ENCODE measurements at regions of chr15 and their contacts with region 1.

Region 1: DNA sequence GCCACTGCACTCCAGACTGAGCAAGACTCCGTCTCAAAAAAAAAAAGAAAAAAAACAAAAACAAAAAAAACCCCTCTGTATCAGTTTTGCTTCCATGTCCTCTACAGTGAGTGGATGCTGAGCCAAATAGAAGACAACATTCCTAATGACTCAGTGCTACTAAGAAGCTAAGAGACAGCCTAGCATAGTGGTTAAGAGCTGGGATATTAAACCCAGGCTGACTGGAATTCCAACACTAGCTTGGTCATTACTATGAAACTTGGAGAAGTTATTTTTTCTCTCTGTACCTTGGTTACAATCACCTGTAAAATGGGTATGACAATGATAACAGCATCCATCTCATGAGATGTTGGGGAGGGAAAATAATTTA is 60.9 kb upstream of the PYGO1 start:
- DNase-seq: no peak
- ATAC-seq: no peak
- H3K4me3 ChIP-seq: no peak overlapping the region
- H3K27ac ChIP-seq: no peak overlapping the region
- H3K4me1 ChIP-seq: no peaks in the 10 kb centered on the region
- H3K27me3 ChIP-seq: no peaks in the 10 kb centered on the region

Region 2: GRCh38 chr15:55526559-55527036 is 122.4 kb before region 1 on chr15:
- intact Hi-C with region 1: loop called (anchors 5 to 10 kb)
- DNase-seq: peak in 1 of 2 donors; percentile 59
- ATAC-seq: peak; percentile 48
- H3K4me3 ChIP-seq: no peak overlapping the region
- H3K27ac ChIP-seq: no peak overlapping the region
- H3K4me1 ChIP-seq: no peaks in the 10 kb centered on the region
- H3K27me3 ChIP-seq: no peaks in the 10 kb centered on the region

Region 3: DNA sequence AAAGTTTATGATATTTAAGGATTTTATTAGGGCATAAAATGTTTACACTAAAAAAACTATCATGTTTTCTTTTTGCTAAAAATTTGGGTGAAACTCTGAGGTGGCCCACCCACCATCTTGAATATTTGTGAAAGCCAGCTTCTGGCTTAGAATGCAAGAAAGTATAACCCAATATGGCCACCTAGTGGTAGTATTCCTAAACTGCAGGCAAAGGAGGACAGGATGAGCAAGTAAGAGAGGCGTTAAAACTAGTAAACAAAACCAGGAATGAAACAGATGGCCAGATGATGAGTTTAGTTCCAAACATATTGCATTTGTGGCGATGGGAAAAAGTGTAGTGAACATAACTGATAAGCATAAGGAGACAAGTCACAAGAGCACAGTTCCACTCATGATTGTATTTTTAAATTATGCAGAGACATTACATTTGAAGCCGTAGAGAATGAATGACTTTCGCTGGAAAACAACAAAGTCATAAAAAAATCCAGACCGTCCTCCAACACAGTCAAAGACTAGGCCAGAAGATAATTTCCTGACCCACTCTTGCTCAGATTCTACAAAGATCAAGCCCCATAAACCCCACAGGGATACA is 197.2 kb after region 1 on chr15:
- intact Hi-C with region 1: loop called (anchors 5 kb)
- DNase-seq: no peak
- ATAC-seq: peak; percentile 74
- H3K4me3 ChIP-seq: no peak overlapping the region
- H3K27ac ChIP-seq: no peak overlapping the region
- H3K4me1 ChIP-seq: no peaks in the 10 kb centered on the region
- H3K27me3 ChIP-seq: no peaks in the 10 kb centered on the region

Region 4: DNA sequence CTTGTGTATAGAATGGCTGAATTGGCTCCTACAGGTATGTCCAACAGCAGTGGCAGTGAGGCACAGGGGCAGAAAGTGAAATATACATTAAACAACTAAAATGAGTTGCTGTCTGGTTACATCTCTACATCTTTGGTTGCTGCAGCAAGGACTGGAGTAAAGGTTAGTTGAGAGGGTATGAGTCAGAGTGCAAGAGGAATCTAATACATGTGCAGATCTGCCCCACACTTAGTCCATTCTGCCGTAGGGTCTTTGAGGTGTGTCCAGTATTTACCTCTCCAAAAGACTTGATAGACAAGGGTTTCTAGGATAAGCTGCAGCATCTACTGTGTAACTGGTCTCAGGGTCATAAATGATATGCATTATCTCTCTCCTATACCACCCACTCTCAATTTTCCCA is 350.6 kb after region 1 on chr15:
- intact Hi-C with region 1: no loop called
- DNase-seq: no peak
- ATAC-seq: no peak
- H3K4me3 ChIP-seq: no peak overlapping the region
- H3K27ac ChIP-seq: no peak overlapping the region
- H3K4me1 ChIP-seq: no peaks in the 10 kb centered on the region
- H3K27me3 ChIP-seq: no peaks in the 10 kb centered on the region